ENCODE measurements at regions of chr6 and their contacts with region 1.

Region 1: GRCh38 chr6:4801491-4802110 is 25.4 kb downstream of the CDYL start:
- DNase-seq: peak; percentile 22
- ATAC-seq: peak; percentile 86
- H3K4me3 Mint-ChIP-seq: peak overlapping the region; percentile 16
- H3K27ac Mint-ChIP-seq: no peak overlapping the region
- H3K4me1 Mint-ChIP-seq: peaks cover 72% of the 10 kb centered on the region
- H3K27me3 Mint-ChIP-seq: no peaks in the 10 kb centered on the region

Region 2: GRCh38 chr6:4788953-4789584 is 12.5 kb before region 1 on chr6:
- CTCF ChIA-PET with region 1: interaction called, 11 read pairs
- POLR2A ChIA-PET with region 1: no interaction called
- intact Hi-C with region 1: no loop called
- DNase-seq: no peak
- ATAC-seq: no peak
- H3K4me3 Mint-ChIP-seq: no peak overlapping the region
- H3K27ac Mint-ChIP-seq: no peak overlapping the region
- H3K4me1 Mint-ChIP-seq: peaks cover 61% of the 10 kb centered on the region
- H3K27me3 Mint-ChIP-seq: no peaks in the 10 kb centered on the region

Region 3: DNA sequence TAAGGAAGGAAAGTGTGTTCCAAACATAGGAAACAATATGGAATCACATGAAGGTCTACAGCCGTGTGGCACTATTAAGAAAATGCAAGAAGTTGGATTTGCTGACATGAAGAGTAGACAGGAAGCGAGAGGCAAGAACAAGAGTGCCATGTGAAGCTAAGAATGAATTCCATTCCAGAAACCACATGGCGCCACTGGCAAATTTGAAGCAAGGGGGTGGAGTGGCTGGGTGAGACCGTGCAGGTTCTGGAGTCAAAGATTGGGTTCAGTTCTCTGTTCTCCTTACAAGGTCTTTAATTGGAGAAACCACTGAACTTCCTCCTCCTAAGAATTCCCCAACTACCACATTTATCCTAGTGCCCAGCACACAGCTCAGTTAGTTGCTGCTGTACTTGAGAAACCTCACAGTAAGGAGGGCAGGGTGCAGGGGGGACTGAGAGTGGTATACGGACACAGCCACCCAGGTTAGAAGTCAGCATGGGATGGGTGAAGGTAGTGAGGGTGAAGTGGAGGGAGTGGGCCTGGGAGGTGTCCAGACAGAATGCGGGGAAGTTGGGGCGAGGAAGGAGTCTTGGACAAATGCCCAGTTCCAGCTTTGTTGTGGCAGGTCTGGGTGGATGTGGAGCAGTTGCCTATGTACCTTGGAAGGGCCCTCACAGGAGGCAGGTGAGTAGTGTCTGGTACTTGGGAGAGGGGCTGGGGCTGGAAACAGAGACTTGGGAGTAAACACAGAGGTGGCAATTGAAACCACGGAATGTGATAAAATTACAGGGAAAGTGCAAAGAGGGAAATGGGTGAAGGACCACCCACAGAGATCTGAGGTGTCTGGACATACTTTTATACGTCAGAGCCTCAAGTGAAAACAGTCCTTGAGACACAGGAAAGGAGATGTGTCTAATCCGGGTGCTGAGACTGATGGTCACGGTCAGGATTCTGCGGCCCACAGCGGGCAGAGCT is 444.8 kb after region 1 on chr6:
- CTCF ChIA-PET with region 1: no interaction called
- POLR2A ChIA-PET with region 1: no interaction called
- intact Hi-C with region 1: no loop called
- DNase-seq: no peak
- ATAC-seq: no peak
- H3K4me3 Mint-ChIP-seq: no peak overlapping the region
- H3K27ac Mint-ChIP-seq: no peak overlapping the region
- H3K4me1 Mint-ChIP-seq: peaks cover 5% of the 10 kb centered on the region
- H3K27me3 Mint-ChIP-seq: no peaks in the 10 kb centered on the region